Transverse colon (tissue), 4 donors: ENCODE measurements at regions of chr4 and their contacts with region 1.

Region 1: DNA sequence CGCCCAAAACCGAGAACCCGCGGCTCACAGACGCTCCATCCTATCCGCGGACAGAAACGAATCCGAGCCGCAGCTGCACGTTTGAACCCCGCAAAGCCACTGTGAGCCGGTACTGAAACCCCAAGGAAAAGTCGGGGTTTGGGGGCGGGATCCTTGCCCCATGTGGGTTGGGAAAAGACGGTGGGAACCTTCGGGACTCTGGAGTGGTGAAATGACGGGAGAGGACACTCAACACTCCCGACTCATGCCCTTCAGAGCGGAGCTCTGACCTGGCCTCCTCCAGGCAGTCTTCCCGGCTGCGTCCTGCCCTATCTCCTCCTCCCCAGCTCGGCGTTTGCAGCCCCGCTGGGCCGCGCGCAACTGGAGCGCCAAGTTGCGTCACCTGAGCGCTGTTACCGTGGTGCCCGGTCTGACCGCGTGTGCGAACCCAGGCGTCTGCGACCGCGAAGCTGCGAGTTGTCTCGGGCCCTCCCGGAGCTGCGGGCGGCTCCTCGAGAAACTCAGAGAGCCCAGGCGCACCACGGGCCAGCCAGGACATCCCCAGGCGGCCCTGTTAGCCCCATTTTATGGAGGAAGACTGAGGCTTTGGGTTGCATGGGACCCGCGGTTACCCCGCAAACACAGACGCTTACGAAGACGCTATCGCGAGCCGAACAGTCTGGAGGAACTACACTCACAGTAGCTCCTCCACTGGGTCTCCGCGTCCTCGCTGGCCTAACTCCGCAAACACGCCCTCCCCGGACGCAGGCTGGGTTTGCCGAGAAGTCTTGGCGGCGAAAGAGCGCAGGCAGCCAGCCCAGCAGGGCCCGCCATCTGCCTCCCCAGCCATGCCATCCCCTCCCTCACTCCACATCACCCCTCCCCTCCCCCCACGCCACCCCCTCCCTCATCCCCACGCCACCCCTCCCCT is 20.3 kb upstream of the HMX1 start:
- DNase-seq: no peak
- H3K4me3 ChIP-seq: no peak overlapping the region
- H3K27ac ChIP-seq: no peak overlapping the region
- H3K4me1 ChIP-seq: no peaks in the 10 kb centered on the region
- H3K27me3 ChIP-seq: peaks cover 93% of the 10 kb centered on the region
- CTCF ChIP-seq: no peak
- EP300 ChIP-seq: no peak
- POLR2A ChIP-seq: no peak

Region 2: GRCh38 chr4:8468746-8469535 is 423.0 kb before region 1 on chr4:
- in situ Hi-C with region 1: no loop called
- intact Hi-C with region 1: no loop called
- DNase-seq: peak; percentile 55
- H3K4me3 ChIP-seq: no peak overlapping the region
- H3K27ac ChIP-seq: no peak overlapping the region
- H3K4me1 ChIP-seq: peaks cover 5 to 20% (median 12%) of the 10 kb centered on the region in 4 donors
- H3K27me3 ChIP-seq: no peaks in the 10 kb centered on the region
- CTCF ChIP-seq: peak; percentile 74 to 94 (median 85)
- EP300 ChIP-seq: no peak
- POLR2A ChIP-seq: no peak

Region 3: DNA sequence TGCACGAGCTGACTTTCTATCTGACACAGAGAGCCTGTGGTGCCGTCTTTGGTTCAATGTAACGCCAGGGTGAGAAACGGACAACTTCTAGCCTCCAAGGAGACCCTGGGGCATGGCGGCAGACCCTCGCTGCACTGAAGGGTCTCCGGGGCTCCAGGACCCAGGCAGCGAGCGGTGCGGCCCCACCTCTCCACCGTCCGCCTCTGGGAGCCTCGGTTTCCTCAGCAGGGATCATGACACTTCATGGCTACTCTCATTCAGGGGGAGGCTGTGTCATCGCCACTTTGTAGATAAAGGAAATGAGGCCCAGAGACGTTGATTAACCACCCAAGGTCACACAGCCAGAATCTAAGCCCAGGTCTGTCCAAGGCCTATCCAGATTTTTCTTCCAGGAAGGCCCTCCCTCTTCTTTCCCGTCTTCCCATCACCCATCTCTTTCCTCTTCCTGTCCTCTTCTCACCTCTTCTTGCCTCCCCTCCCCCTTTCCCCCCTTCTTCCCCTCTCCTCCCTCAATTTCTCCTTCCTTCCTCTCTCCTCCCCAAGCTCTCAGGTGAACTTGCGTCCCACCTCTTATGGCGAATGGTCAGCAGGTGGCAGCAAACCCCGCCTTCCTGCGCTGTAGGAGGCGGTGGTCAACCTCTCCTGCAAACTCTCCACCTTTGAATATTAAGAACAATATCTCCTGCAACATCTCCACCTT is 49.0 kb after region 1 on chr4:
- in situ Hi-C with region 1: no loop called
- intact Hi-C with region 1: no loop called
- DNase-seq: no peak
- H3K4me3 ChIP-seq: no peak overlapping the region
- H3K27ac ChIP-seq: no peak overlapping the region
- H3K4me1 ChIP-seq: peaks cover 0 to 4% (median 0%) of the 10 kb centered on the region in 4 donors
- H3K27me3 ChIP-seq: peaks cover 9% of the 10 kb centered on the region
- CTCF ChIP-seq: peak in 2 of 5 experiments; percentile 16 to 17
- EP300 ChIP-seq: no peak
- POLR2A ChIP-seq: no peak

Region 4: DNA sequence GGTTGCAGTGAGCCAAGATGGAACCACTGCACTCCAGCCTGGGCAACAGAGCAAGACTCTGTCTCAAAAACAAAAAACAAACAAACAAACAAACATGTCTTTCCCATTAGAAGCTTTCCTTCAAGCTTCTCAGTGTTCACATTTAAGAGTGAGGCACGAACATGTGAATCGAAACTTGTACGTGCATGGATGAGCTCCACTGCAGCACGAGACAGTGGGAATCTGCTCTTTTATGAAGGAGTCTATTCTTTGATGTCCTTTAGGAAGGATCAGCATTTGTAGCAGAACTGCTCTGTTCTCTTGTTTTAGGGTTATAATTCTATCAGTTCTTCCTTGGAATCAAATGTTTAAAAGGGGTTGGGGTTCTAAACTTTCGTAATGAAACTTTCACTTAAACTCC is 1588.7 kb after region 1 on chr4:
- in situ Hi-C with region 1: no loop called
- intact Hi-C with region 1: loop called (anchors 5 kb)
- DNase-seq: no peak
- H3K4me3 ChIP-seq: no peak overlapping the region
- H3K27ac ChIP-seq: no peak overlapping the region
- H3K4me1 ChIP-seq: no peaks in the 10 kb centered on the region
- H3K27me3 ChIP-seq: no peaks in the 10 kb centered on the region
- CTCF ChIP-seq: no peak
- EP300 ChIP-seq: no peak
- POLR2A ChIP-seq: no peak